Calu3 (cell line): ENCODE measurements at regions of chr11 and their contacts with region 1.

Region 1: DNA sequence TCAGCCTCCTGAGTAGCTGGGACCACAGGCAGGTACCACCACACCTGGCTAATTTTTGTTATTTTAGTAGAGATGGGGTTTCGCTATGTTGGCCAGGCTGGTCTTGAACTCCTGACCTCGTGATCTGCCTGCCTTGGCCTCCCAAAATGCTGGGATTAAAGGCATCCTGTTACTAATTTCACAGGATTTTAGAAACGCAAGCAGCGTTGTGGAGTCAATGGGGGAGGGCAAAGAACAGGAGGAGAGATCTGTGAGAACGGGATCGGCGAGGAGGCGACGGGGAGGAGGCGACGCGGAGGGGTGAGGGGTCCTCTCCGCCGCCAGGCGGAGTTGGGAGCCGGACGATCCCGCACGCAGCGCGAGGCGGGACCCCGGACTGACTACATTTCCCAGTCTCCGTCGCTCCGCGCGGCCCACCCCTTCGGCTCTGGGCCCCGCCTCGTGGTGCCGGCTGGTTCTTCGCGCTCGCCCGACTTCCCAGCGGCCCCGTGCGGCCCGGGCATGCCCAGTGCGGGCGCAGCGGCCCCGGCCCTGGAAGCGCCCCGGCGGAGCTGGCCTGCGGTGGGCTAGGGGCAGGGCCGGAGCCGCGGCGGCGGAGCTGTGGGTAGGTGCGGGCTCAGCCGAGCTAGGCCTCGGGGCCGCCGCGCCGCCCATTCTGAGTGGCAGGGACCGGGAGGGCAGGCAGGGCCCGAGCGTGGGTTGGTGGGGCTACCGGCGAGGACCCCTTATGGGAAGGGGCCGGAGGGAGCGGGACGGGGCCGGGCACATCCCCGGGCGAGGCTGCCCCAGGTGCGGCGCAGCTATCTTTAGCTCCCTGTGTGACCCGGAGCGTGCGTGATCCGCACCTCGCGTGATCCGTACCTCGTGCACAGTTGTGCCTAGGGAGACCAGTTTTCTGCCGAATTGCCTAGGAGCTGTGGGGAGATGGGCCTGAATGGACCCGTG is at the start of gene EI24:
- DNase-seq: peak; percentile 91
- H3K4me3 Mint-ChIP-seq: peak within 1 kb of the TSS; percentile 78
- H3K27ac Mint-ChIP-seq: peak within 1 kb of the TSS; percentile 87
- H3K4me1 Mint-ChIP-seq: no peaks in the 10 kb centered on the region
- H3K27me3 Mint-ChIP-seq: no peaks in the 10 kb centered on the region
- CTCF ChIP-seq: peak; percentile 61
- total RNA-seq, gene EI24: 76.7 and 82.2 TPM in 2 replicates

Region 2: GRCh38 chr11:125224391-125225010 is 344.7 kb before region 1 on chr11:
- CTCF ChIA-PET with region 1: no interaction called
- intact Hi-C with region 1: no loop called
- DNase-seq: no peak
- H3K4me3 Mint-ChIP-seq: no peak overlapping the region
- H3K27ac Mint-ChIP-seq: no peak overlapping the region
- H3K4me1 Mint-ChIP-seq: no peaks in the 10 kb centered on the region
- H3K27me3 Mint-ChIP-seq: peaks cover 84% of the 10 kb centered on the region
- CTCF ChIP-seq: no peak

Region 3: DNA sequence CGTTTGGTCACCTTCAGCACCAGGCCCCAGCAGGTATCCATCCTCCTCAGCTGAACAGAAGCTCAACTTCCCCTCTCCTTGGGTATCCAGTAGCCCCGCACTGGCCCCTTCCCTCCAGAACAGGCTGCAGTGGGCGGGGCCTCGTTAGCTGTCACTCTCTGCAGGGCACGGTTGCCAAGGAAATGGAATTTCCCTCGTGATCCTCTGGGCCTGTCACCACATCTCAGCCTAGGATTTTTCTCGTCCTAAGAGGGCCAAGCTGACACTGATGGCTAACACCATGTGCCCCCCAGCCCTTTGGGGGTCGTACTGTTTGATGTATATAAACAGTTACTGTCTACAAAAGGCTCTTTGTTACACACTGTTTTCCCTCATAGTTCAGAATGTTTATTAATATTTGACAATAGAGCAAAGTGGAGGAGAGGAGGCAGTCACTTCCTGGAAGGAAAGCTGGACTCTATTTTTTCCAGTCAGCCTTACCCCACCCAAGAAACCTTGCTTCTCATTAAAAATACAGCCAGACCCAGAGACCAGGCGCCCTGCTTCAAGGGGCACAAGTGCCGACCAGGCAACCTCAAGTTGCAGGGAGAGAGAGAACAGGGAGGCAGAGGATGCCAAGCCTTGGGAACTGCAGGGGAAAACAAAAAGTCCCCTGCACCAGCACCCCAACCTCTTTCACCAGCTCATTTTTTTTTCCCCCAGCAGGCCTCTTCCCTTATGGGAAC is 117.7 kb before region 1 on chr11:
- CTCF ChIA-PET with region 1: no interaction called
- intact Hi-C with region 1: loop called (anchors 10 kb)
- DNase-seq: peak; percentile 72
- H3K4me3 Mint-ChIP-seq: no peak overlapping the region
- H3K27ac Mint-ChIP-seq: no peak overlapping the region
- H3K4me1 Mint-ChIP-seq: peaks cover 9% of the 10 kb centered on the region
- H3K27me3 Mint-ChIP-seq: no peaks in the 10 kb centered on the region
- CTCF ChIP-seq: no peak

Region 4: GRCh38 chr11:125514336-125515101 is 54.7 kb before region 1 on chr11:
- CTCF ChIA-PET with region 1: interaction called, 5 read pairs
- intact Hi-C with region 1: loop called (anchors 5 kb)
- DNase-seq: peak; percentile 51
- H3K4me3 Mint-ChIP-seq: peak overlapping the region; percentile 5
- H3K27ac Mint-ChIP-seq: peak overlapping the region; percentile 74
- H3K4me1 Mint-ChIP-seq: peaks cover under 1% of the 10 kb centered on the region
- H3K27me3 Mint-ChIP-seq: no peaks in the 10 kb centered on the region
- CTCF ChIP-seq: no peak